ENCODE measurements at regions of chr5 and their contacts with region 1.

Region 1: DNA sequence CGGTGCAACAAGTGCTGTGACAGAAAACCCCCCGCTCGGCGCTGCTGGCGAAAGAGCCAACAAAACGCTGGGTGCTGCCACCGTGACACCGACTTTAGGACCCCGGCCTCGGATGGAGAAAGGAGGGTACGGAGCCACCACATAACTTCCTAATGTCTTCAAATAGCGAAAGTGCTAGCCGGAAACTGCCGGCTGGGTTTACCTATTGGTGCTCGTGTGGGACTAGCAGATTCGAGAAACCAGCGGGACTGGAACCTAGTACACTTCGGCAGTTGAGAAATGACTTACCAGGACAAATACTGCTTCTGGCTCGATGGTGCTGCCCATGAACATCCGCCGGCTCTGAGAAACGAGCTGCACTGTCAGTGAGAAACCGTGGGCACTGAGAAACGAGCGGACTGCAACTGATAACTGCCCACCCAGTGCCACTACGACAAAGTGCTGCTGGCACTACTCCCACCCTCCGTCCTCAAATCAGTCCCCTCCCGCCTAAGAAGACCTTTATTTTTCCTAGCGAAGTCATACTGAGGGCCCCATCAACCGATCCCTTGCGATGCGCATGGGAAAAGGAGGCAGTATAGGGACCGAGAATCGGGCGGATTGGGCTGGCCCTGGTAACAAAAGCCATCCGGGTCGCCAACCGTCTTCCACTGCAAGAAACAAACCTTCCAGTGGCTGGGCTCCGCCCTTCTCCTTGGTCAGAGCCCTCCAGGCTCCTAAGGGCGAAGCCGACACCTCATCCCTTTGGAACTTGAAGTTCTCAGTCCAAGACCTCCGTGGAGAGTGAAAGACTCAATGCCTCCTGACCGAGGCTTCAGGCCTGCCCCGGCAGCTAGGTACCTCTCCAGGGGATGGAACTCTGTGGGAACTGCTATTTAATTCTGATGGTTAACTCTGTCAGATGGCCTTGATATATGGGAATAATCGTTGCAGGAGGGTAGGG is 27.0 kb upstream of the ANXA2R start:
- DNase-seq: peak; percentile 88 to 89
- ATAC-seq: peak; percentile 73 to 77
- H3K4me3 ChIP-seq: peak overlapping the region; percentile 84 to 93 (median 87)
- H3K27ac ChIP-seq: peak overlapping the region; percentile 91 to 98 (median 94)
- H3K4me1 ChIP-seq: peaks cover 31 to 33% of the 10 kb centered on the region in 2 donors
- H3K27me3 ChIP-seq: no peaks in the 10 kb centered on the region
- CTCF ChIP-seq: no peak
- POLR2A ChIP-seq: peak; percentile 67 to 69

Region 2: DNA sequence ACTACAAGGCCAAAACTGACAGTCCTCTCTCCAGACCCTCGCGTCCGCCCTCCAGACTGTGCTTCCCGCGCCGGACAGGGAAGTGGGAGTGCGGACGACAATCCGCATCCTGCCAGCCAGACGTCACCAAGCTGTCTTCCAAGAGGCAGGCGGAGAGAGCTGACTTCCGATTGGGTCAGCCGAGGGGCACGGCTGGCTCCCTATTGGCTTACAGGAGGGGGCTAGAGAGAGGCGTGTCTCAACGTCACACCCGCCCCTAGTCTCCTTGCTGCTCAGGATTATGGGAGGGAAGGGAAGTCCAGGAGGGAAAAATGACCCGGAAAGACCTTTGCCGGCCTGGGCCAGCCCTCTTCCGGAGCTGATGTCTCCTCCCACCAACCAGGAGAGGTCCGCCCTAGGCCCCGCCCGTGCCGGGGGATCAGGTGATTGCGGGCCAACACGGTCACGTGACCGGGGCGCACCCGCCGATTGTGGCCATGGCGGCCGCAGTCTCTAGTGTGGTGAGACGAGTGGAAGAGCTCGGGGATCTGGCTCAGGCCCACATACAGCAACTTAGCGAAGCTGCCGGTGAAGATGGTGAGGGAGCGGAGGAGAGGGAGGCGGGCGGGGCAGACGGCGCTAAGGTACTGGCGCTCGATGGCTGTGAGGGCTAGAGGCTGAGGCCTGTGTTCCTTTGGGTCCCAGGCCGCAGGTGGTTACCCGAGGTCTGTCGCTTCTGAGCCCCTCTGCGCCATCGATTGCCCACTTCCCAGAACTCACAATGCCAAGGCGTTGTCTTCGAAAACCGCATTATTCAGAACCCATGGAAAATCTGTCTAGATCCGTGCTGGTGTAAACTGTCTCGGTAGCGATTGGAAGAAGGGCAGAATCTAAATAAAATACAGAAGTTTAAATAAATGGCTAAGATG is 1162.9 kb before region 1 on chr5 and contains the start of gene RIMOC1:
- in situ Hi-C with region 1: no loop called
- intact Hi-C with region 1: loop called (anchors 10 kb)
- DNase-seq: peak; percentile 98 to 99
- ATAC-seq: peak; percentile 98 to 99
- H3K4me3 ChIP-seq: peak within 1 kb of the TSS; percentile 80 to 88 (median 84)
- H3K27ac ChIP-seq: peak within 1 kb of the TSS; percentile 89 to 95 (median 93)
- H3K4me1 ChIP-seq: peaks cover 27 to 46% of the 10 kb centered on the region in 2 donors
- H3K27me3 ChIP-seq: no peaks in the 10 kb centered on the region
- CTCF ChIP-seq: peak in 2 of 5 experiments; percentile 50 to 59
- POLR2A ChIP-seq: peak; percentile 85 to 95
- total RNA-seq, gene RIMOC1: 5.0 to 8.2 (median 6.2) TPM

Region 3: DNA sequence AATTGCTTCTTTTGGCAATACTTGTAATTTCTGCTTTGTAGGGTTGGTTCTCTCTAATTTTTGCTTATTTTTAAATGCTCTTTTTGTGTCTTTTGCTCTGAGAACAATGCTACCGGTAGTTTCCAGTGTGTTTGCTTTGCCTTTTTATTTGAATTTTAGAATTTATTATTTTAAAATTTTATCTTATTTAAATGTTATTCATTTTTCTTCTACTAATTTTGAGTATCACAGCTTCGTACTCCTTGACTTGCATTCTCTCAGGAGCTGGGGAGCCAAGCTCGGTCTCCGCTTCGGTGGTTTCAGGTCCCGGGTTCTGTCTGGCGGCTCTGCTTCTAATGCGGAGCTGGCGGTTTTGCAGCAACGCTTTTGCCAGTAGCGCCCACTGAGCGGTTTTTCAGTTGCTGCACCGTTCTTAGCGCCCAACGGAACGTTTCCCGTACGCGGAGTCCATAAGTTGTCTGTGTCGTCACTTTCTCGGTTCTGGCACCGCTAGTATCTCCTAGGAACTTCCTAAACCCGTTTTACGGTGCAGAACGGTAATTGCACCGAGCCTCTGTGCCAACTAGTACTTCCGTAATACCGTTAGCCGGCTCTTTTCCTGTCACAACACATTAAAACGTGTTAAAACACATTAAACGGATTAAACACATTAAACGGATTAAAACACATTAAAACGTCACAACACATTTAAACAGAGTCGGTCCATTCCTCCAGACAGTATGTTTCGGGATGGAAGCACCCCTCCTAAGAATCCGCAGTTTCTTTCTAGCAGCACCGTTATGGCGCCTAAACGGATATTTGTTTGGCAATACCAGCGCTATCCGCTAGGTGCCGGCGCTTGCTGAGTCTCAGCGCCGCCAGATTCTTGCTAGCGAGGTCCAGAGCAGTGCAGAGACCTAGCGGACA is 72.6 kb before region 1 on chr5:
- in situ Hi-C with region 1: no loop called
- intact Hi-C with region 1: loop called (anchors 1 kb)
- DNase-seq: peak; percentile 64 to 85
- ATAC-seq: peak; percentile 87 to 88
- H3K4me3 ChIP-seq: peak overlapping the region; percentile 46 to 70 (median 66)
- H3K27ac ChIP-seq: peak overlapping the region; percentile 85 to 93 (median 88)
- H3K4me1 ChIP-seq: peaks cover 5 to 15% of the 10 kb centered on the region in 2 donors
- H3K27me3 ChIP-seq: peaks cover 68 to 83% (median 69%) of the 10 kb centered on the region in 3 donors
- CTCF ChIP-seq: peak; percentile 84 to 92 (median 89)
- POLR2A ChIP-seq: no peak

Region 4: DNA sequence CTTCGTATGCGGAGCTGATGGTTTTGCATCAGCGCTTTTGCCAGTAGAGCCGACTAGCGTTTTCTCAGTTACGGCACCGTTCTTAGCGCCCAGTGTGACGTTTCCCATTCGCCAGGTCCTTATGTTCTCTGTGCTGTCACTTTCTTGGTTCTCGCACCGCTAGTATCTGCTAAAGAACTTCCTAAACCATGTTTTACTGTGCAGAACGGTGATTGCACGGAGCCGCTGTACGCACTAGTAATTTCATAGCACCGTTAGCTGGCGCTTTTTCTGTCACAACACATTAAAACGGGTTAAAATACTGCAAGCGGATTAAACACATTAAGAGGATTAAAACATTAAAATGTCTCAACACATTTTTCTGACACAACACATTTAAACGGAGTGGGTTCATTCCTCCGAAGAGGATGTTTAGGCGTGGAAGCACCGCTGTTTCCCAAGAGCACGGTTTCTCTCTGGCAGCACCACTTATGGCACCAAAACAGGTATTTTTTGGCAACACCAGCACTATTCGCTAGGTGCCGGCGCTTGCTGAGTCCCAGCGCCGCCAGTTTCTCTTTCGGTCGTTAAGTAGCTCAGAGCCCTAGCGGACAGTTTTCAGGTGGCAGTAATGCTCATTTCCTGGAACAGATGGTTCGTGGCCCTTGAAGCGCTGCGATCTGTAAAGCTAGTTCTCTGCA is 47.3 kb before region 1 on chr5:
- in situ Hi-C with region 1: no loop called
- intact Hi-C with region 1: loop called (anchors 2 kb)
- DNase-seq: peak; percentile 53 to 74
- ATAC-seq: peak; percentile 62 to 67
- H3K4me3 ChIP-seq: peak overlapping the region; percentile 68 to 90 (median 80)
- H3K27ac ChIP-seq: peak overlapping the region; percentile 95 to 100 (median 96)
- H3K4me1 ChIP-seq: peaks cover 6 to 19% of the 10 kb centered on the region in 2 donors
- H3K27me3 ChIP-seq: peaks cover 0 to 9% (median 0%) of the 10 kb centered on the region in 3 donors
- CTCF ChIP-seq: peak in 4 of 5 experiments; percentile 28 to 65 (median 51)
- POLR2A ChIP-seq: no peak

Region 5: DNA sequence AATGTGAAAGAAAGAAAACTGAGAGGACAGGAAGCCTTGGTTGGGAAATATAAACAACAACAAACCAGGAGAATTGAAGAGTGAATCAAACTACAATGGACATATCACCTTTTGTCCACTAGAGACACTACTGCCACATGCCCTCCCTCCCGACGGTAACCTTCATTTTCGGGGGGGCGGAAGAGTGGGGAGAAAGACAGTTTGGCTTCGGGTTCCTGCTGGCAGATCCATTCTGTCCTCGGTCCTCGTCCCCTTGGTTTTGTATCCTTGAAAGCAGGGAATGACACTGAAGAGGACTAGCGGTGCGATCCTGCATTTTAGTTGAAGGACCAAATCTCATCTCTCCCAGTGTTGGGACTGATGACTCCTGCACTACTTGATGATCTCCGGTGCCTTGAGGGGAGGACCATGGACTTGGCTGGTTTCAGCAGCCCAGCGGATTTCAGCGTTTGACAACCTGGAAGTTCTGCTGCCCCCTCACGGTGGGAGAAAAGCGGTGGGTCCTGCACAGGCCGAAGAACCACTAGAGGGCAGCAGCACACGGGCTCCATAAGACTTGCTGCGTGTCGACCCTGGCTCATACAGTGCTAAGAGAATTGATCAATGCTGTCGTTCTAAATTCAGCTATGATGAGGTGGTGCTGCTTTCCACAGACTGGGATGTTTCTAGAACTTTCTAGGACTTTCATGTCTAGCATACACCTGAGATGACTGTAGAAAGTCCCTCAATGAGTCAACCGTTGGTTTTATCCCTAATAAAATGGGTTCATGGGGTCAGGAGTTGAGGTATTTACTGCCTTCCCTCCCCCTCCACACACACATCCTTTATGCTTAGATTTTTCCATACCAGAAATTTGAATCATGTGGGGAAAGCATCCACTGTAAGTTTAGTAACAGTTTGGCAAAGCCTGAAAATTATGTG is 38.6 kb after region 1 on chr5:
- in situ Hi-C with region 1: loop called in 1 of 4 experiments (anchors 5 kb)
- intact Hi-C with region 1: no loop called
- DNase-seq: peak; percentile 78 to 86
- ATAC-seq: peak; percentile 97 to 98
- H3K4me3 ChIP-seq: peak overlapping the region; percentile 50 to 77 (median 61)
- H3K27ac ChIP-seq: peak overlapping the region; percentile 71 to 85 (median 79)
- H3K4me1 ChIP-seq: peaks cover 3 to 4% of the 10 kb centered on the region in 2 donors
- H3K27me3 ChIP-seq: no peaks in the 10 kb centered on the region
- CTCF ChIP-seq: peak; percentile 94 to 100 (median 97)
- POLR2A ChIP-seq: no peak

Region 6: GRCh38 chr5:43313035-43313853 is 246.2 kb after region 1 on chr5 and contains the start of gene HMGCS1:
- in situ Hi-C with region 1: no loop called
- intact Hi-C with region 1: loop called (anchors 5 kb)
- DNase-seq: peak; percentile 98 to 99
- ATAC-seq: peak; percentile 99
- H3K4me3 ChIP-seq: peak within 1 kb of the TSS; percentile 77 to 93 (median 83)
- H3K27ac ChIP-seq: peak within 1 kb of the TSS; percentile 89 to 94 (median 90)
- H3K4me1 ChIP-seq: peaks cover 18 to 28% of the 10 kb centered on the region in 2 donors
- H3K27me3 ChIP-seq: no peaks in the 10 kb centered on the region
- CTCF ChIP-seq: peak in 1 of 5 experiments; percentile 14
- POLR2A ChIP-seq: peak; percentile 87 to 96
- total RNA-seq, gene HMGCS1: 6.1 to 15.0 (median 8.2) TPM